Stomach (tissue), 19 donors: ENCODE measurements at regions of chr14 and their contacts with region 1.

Region 1: GRCh38 chr14:104137297-104138097 is 890 bp upstream of the KIF26A start:
- DNase-seq: peak; percentile 70 to 84
- H3K4me3 ChIP-seq: peak overlapping the region; percentile 41 to 63 (median 53)
- H3K27ac ChIP-seq: peak overlapping the region in 1 of 5 donors; percentile 65
- H3K4me1 ChIP-seq: peaks cover 26 to 48% (median 44%) of the 10 kb centered on the region in 4 donors
- H3K27me3 ChIP-seq: peaks cover 16 to 88% (median 57%) of the 10 kb centered on the region in 3 donors
- CTCF ChIP-seq: peak in 5 of 7 experiments; percentile 39 to 93 (median 84)
- EP300 ChIP-seq: no peak
- POLR2A ChIP-seq: no peak

Region 2: DNA sequence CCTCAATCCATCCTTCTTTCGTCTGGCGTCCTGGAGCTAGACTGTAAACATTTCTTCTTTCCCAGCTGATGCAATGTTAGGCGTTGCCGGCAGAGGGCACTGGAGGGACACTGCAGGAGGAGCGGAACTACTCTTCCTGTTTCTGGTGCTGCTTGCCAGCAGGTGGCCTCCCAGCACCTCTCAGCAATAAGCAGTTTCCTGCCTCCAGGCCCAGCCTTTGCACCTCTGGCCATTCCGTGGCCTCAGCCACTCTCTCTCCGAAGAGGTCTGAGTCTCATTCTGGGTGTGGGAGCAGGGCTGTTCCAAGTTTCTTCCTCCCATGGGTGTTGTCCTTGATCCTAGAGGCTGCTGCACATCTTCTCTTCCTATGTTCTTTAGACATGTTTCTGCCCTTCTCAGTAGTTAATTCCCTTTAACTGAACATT is 59.5 kb before region 1 on chr14:
- intact Hi-C with region 1: loop called (anchors 10 kb)
- DNase-seq: peak; percentile 94 to 96
- H3K4me3 ChIP-seq: no peak overlapping the region
- H3K27ac ChIP-seq: no peak overlapping the region
- H3K4me1 ChIP-seq: peaks cover 15 to 26% (median 23%) of the 10 kb centered on the region in 4 donors
- H3K27me3 ChIP-seq: peaks cover 0 to 8% (median 0%) of the 10 kb centered on the region in 3 donors
- CTCF ChIP-seq: peak in 6 of 7 experiments; percentile 24 to 100 (median 99)
- EP300 ChIP-seq: no peak
- POLR2A ChIP-seq: no peak

Region 3: GRCh38 chr14:104184911-104185499 is 47.5 kb after region 1 on chr14:
- intact Hi-C with region 1: no loop called
- DNase-seq: peak in 1 of 2 donors; percentile 67
- H3K4me3 ChIP-seq: no peak overlapping the region
- H3K27ac ChIP-seq: peak overlapping the region in 4 of 5 donors; percentile 11 to 43 (median 21)
- H3K4me1 ChIP-seq: peaks cover 0 to 9% (median 4%) of the 10 kb centered on the region in 4 donors
- H3K27me3 ChIP-seq: peaks cover 0 to 62% (median 0%) of the 10 kb centered on the region in 3 donors
- CTCF ChIP-seq: no peak
- EP300 ChIP-seq: no peak
- POLR2A ChIP-seq: no peak

Region 4: GRCh38 chr14:104563742-104564615 is 426.5 kb after region 1 on chr14:
- intact Hi-C with region 1: loop called (anchors 5 kb)
- DNase-seq: peak; percentile 75 to 88
- H3K4me3 ChIP-seq: no peak overlapping the region
- H3K27ac ChIP-seq: no peak overlapping the region
- H3K4me1 ChIP-seq: peaks cover 0 to 12% (median 8%) of the 10 kb centered on the region in 4 donors
- H3K27me3 ChIP-seq: peaks cover 0 to 84% (median 28%) of the 10 kb centered on the region in 3 donors
- CTCF ChIP-seq: peak in 5 of 7 experiments; percentile 57 to 87 (median 77)
- EP300 ChIP-seq: no peak
- POLR2A ChIP-seq: no peak

Region 5: DNA sequence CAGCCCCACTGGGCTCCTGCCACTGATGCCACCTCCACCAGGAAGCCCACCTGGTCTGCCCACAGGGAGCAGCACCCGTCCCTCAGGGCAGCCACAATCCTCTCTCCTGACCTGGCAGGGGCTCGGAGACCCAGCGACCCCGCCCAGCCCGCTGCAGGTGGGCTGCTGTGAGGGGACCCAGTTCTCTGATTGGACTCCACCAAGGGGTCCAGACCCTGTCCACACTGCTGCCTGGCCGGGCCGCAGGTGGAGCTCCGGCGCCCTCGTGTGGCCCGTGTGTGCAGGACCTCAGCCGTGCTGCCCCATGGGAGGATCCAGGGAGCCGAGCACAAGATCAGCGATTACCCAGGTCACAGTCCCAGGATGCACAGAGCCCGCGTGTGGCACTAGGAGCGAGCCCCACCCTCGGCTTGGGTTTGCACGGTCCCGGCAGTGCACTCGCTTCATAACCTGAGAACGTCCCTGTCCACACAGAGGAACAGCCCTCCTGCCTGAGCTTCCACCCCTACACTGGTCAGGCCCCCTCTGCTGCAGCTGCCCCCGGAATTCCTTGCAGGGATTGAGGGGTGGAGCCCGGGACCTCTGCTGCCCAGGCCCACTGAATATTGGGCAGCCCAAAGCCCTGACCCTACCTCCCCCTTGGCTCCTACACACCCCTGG is 502.5 kb after region 1 on chr14:
- intact Hi-C with region 1: loop called (anchors 10 kb)
- DNase-seq: peak; percentile 72 to 89
- H3K4me3 ChIP-seq: no peak overlapping the region
- H3K27ac ChIP-seq: no peak overlapping the region
- H3K4me1 ChIP-seq: peaks cover 0 to 7% (median 6%) of the 10 kb centered on the region in 4 donors
- H3K27me3 ChIP-seq: peaks cover 0 to 69% (median 31%) of the 10 kb centered on the region in 3 donors
- CTCF ChIP-seq: peak in 5 of 7 experiments; percentile 51 to 82 (median 73)
- EP300 ChIP-seq: no peak
- POLR2A ChIP-seq: no peak